ENCODE measurements at regions of chr12 and their contacts with region 1.

Region 1: GRCh38 chr12:121351820-121352681 is at the start of gene ANAPC5:
- DNase-seq: peak; percentile 96
- total RNA-seq, gene ANAPC5: 53.4 TPM

Region 2: GRCh38 chr12:121399391-121400331 is 47.6 kb after region 1 on chr12 and contains the start of gene RNF34:
- intact Hi-C with region 1: loop called (anchors 2 kb)
- DNase-seq: peak; percentile 99
- total RNA-seq, gene RNF34: 31.1 TPM

Region 3: GRCh38 chr12:121443193-121443870 is 91.3 kb after region 1 on chr12:
- intact Hi-C with region 1: loop called (anchors 5 kb)
- DNase-seq: peak; percentile 93